ENCODE measurements at regions of chr1 and their contacts with region 1.

Region 1: GRCh38 chr1:156308078-156308477 is 9.0 kb upstream of the VHLL start:
- DNase-seq: no peak
- H3K4me3 Mint-ChIP-seq: no peak overlapping the region
- H3K27ac Mint-ChIP-seq: no peak overlapping the region
- H3K4me1 Mint-ChIP-seq: no peaks in the 10 kb centered on the region
- H3K27me3 Mint-ChIP-seq: no peaks in the 10 kb centered on the region

Region 2: GRCh38 chr1:156070548-156070947 is 237.5 kb before region 1 on chr1:
- CTCF ChIA-PET with region 1: no interaction called
- POLR2A ChIA-PET with region 1: no interaction called
- DNase-seq: no peak
- H3K4me3 Mint-ChIP-seq: no peak overlapping the region
- H3K27ac Mint-ChIP-seq: no peak overlapping the region
- H3K4me1 Mint-ChIP-seq: peaks cover 13% of the 10 kb centered on the region
- H3K27me3 Mint-ChIP-seq: peaks cover 10% of the 10 kb centered on the region

Region 3: DNA sequence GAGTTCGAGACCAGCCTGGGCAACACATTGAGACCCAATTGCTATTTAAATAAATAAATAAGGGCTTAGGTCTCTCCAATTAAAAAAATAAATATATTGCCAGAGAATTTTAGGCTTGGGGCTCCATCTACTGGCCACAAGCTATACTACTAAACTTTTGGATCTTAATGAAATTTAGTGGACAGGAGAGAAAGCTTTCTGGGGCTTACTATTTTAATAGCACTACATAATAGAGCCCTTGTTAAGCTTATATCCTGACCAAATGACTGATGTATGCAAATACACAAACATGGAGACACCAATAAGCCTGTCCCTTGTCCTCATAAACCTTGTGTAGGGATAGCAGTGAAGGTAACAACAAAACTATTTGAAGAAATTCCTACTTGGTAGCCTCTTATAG is 11.6 kb after region 1 on chr1:
- CTCF ChIA-PET with region 1: interaction called, 10 read pairs
- POLR2A ChIA-PET with region 1: no interaction called
- DNase-seq: peak; percentile 27
- H3K4me3 Mint-ChIP-seq: no peak overlapping the region
- H3K27ac Mint-ChIP-seq: no peak overlapping the region
- H3K4me1 Mint-ChIP-seq: no peaks in the 10 kb centered on the region
- H3K27me3 Mint-ChIP-seq: no peaks in the 10 kb centered on the region